Activated CD4-positive, alpha-beta memory T cell treated with anti-CD3 and anti-CD28 coated beads for 36 hours (primary cell): ENCODE measurements at regions of chr2 and their contacts with region 1.

Region 1: GRCh38 chr2:9703085-9703641 is 72.4 kb upstream of the YWHAQ start:
- DNase-seq: peak; percentile 95
- H3K4me3 Mint-ChIP-seq: no peak overlapping the region
- H3K27ac Mint-ChIP-seq: peak overlapping the region; percentile 75
- H3K4me1 Mint-ChIP-seq: peaks cover 54% of the 10 kb centered on the region
- H3K27me3 Mint-ChIP-seq: peaks cover 3% of the 10 kb centered on the region

Region 2: DNA sequence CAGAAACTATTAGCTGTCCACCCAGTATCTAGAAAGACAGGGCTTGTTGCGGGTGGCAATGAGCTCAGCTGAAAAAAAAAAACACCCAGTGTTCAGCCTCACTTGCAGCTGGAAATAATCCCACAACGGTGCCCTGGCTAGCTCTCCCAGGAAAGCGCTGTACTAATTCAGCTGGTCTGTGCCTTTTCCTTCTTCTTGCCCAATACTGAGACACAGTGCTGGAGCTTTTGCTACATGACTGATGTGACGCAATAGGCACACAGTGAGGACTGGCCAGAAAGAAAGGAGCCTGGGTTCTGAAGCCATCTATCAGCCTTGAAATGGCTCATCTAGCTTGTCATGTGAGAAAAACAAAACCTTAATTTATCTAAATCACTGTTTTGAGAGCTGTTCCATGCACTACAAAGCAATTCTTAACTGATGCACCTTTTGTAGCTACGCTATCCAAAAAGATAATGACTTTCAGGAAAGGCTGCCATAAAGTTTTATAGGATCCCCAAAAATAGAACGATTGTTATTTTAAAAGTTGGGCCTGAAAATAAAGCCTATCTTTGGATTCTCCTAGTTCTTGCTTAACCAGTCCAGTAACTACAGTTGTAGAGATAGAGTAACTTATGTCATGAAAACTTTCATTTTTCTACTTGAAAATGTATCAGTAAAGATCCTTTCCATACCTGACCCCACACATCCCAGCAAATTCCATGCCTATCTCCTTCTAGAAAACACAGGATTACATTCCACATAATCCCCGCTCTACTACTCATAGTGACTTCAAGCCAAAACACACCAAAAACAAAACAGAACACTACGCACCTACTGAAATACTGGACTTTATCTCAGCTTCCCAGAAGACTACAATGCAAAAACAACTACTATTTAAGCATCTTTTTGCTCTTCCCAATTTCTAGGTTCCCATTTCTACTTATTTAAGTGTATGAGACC is 881.6 kb before region 1 on chr2:
- CTCF ChIA-PET with region 1: no interaction called
- POLR2A ChIA-PET with region 1: no interaction called
- intact Hi-C with region 1: no loop called
- DNase-seq: no peak
- H3K4me3 Mint-ChIP-seq: no peak overlapping the region
- H3K27ac Mint-ChIP-seq: no peak overlapping the region
- H3K4me1 Mint-ChIP-seq: no peaks in the 10 kb centered on the region
- H3K27me3 Mint-ChIP-seq: no peaks in the 10 kb centered on the region

Region 3: GRCh38 chr2:9423100-9423921 is 279.9 kb before region 1 on chr2 and contains the starts of genes CPSF3 and ITGB1BP1:
- CTCF ChIA-PET with region 1: no interaction called
- POLR2A ChIA-PET with region 1: no interaction called
- intact Hi-C with region 1: loop called (anchors 2 kb)
- DNase-seq: peak; percentile 98
- H3K4me3 Mint-ChIP-seq: peak within 1 kb of the TSS; percentile 87
- H3K27ac Mint-ChIP-seq: peak within 1 kb of the TSS; percentile 88
- H3K4me1 Mint-ChIP-seq: peaks cover 35% of the 10 kb centered on the region
- H3K27me3 Mint-ChIP-seq: no peaks in the 10 kb centered on the region
- total RNA-seq, gene CPSF3: 77.5 to 78.1 TPM
- total RNA-seq, gene ITGB1BP1: 136 to 142 TPM

Region 4: DNA sequence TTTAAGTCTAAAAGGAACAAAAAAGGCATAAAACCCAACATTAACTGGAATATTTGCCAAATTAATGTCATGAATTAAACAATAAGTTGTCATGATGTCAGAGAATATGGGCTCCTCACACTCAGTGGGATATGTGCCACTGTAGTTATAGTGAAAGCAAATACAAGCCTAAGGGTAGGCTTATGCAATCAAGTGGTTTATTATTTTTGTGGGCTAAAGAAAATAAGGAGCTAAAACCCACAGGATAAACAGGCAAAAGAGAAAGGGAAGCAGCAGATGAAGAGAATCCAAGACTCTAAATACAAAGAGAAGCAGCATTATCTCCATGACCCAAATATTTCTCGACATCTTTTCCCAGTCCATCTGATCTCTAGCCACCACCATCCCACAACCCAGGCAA is 89.9 kb before region 1 on chr2:
- CTCF ChIA-PET with region 1: interaction called, 4 read pairs
- POLR2A ChIA-PET with region 1: interaction called, 4 read pairs
- intact Hi-C with region 1: loop called (anchors 2 kb)
- DNase-seq: no peak
- H3K4me3 Mint-ChIP-seq: no peak overlapping the region
- H3K27ac Mint-ChIP-seq: no peak overlapping the region
- H3K4me1 Mint-ChIP-seq: peaks cover 90% of the 10 kb centered on the region
- H3K27me3 Mint-ChIP-seq: no peaks in the 10 kb centered on the region

Region 5: DNA sequence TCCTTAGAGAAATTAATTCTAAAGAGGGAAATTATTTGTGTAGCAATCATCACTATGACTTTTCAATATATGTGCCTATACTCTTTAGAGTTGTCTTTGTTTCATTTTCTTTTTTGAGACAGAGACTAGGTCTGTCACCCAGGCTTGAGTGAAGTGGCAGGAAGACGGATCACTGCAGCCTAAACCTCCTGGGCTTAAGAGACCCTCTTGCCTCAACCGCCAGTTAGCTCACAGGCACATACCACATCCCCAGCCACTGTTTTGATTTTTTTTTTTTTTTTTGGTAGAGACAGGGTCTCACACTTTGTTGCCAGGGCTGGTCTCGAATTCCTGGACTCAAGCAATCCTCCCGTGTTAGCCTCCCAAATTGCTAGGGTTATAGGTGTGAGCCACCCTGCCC is 84.8 kb before region 1 on chr2:
- CTCF ChIA-PET with region 1: interaction called, 12 read pairs
- POLR2A ChIA-PET with region 1: no interaction called
- intact Hi-C with region 1: no loop called
- DNase-seq: peak; percentile 37
- H3K4me3 Mint-ChIP-seq: peak overlapping the region; percentile 50
- H3K27ac Mint-ChIP-seq: peak overlapping the region; percentile 80
- H3K4me1 Mint-ChIP-seq: peaks cover 92% of the 10 kb centered on the region
- H3K27me3 Mint-ChIP-seq: no peaks in the 10 kb centered on the region

Region 6: DNA sequence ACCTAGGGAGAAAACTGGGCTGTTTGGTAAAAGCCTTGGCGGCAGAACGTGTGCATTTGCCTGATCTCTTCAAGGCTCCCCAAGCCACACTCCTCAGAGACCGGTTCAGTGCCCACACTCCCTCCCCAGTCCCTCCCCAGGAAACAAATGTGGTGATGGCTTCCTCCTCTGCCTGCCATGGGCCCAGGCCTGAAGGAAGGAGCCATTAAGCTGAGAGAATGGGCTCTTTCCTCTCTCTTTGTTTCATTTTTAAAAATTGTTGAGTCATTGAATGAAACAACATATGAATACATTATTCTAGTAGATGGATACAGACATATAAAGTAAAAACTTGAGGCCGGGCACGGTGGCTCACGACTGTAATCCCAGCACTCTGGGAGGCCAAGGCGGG is 21.7 kb before region 1 on chr2:
- CTCF ChIA-PET with region 1: no interaction called
- POLR2A ChIA-PET with region 1: no interaction called
- intact Hi-C with region 1: no loop called
- DNase-seq: peak; percentile 39
- H3K4me3 Mint-ChIP-seq: no peak overlapping the region
- H3K27ac Mint-ChIP-seq: peak overlapping the region; percentile 74
- H3K4me1 Mint-ChIP-seq: peaks cover 12% of the 10 kb centered on the region
- H3K27me3 Mint-ChIP-seq: no peaks in the 10 kb centered on the region

Region 7: DNA sequence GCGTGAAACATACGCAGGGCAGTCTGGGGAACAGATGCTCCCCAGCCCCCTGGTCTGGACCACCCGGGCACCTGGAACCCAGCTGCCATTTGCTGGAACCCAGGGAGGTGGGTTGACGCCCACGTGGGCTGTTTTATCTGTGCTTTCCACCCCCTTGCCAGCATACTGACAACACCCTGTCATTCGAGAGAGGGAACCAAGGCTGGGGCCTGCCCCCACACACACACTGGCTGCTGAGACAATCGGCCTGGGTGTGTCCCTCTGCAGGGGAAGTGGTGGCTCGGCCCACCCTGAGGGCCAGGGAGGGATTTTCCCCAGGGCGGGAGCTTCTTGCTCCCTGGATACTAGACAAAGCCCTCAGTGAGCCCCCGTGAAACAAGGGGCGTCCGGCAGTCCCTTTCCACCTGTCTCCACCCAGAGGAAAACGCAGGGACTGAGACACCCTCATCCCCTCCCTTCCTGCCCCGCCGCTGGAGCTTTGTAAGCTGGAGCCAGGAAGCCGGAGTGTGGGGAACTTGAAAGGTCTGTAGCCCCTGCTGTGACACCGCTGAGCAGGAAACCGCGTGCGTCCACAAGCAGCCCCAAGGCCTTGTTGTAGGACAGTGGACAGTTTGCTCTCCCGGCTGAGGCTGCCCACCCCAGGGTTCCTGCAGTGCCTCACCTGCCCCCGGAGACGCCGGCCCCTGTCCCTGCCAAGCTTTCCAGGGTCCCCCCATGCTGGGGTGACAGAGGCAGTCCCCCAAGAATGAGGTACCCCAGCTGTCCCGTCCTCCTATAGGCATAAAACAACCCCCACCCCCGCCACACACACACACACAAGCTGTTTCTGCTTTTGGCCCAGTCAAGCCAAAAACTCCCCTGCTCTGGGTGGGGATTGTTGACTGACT is 326.1 kb after region 1 on chr2:
- CTCF ChIA-PET with region 1: no interaction called
- POLR2A ChIA-PET with region 1: no interaction called
- intact Hi-C with region 1: no loop called
- DNase-seq: peak; percentile 73
- H3K4me3 Mint-ChIP-seq: no peak overlapping the region
- H3K27ac Mint-ChIP-seq: no peak overlapping the region
- H3K4me1 Mint-ChIP-seq: peaks cover 19% of the 10 kb centered on the region
- H3K27me3 Mint-ChIP-seq: no peaks in the 10 kb centered on the region